Naive thymus-derived CD4-positive, alpha-beta T cell (primary cell): ENCODE measurements at regions of chr16 and their contacts with region 1.

Region 1: GRCh38 chr16:30429678-30430427 is at the start of gene DCTPP1:
- DNase-seq: peak; percentile 79 to 99 (median 97)
- ATAC-seq: peak; percentile 98
- H3K4me3 ChIP-seq: peak within 1 kb of the TSS; percentile 67
- H3K4me3 Mint-ChIP-seq: no peak within 1 kb of the TSS
- H3K27ac ChIP-seq: peak within 1 kb of the TSS; percentile 85
- H3K27ac Mint-ChIP-seq: peak within 1 kb of the TSS in 1 of 9 donors; percentile 38
- H3K4me1 ChIP-seq: peaks cover 16 to 19% of the 10 kb centered on the region in 2 donors
- H3K4me1 Mint-ChIP-seq: peaks cover 14 to 29% (median 21%) of the 10 kb centered on the region in 7 donors
- H3K27me3 ChIP-seq: no peaks in the 10 kb centered on the region
- H3K27me3 Mint-ChIP-seq: no peaks in the 10 kb centered on the region
- total RNA-seq, gene DCTPP1: 11.6 to 74.1 (median 13.8) TPM

Region 2: GRCh38 chr16:30417529-30418349 is 12.1 kb before region 1 on chr16:
- CTCF ChIA-PET with region 1: interaction called, 20 read pairs
- POLR2A ChIA-PET with region 1: interaction called, 82 read pairs
- intact Hi-C with region 1: loop called (anchors 1 kb)
- DNase-seq: peak; percentile 79 to 93 (median 88)
- ATAC-seq: peak; percentile 95
- H3K4me3 ChIP-seq: peak overlapping the region; percentile 76
- H3K4me3 Mint-ChIP-seq: peak overlapping the region; percentile 54 to 80 (median 70)
- H3K27ac ChIP-seq: peak overlapping the region; percentile 85
- H3K27ac Mint-ChIP-seq: peak overlapping the region in 7 of 9 donors; percentile 69 to 88 (median 81)
- H3K4me1 ChIP-seq: peaks cover 6 to 8% of the 10 kb centered on the region in 2 donors
- H3K4me1 Mint-ChIP-seq: peaks cover 12 to 31% (median 14%) of the 10 kb centered on the region in 7 donors
- H3K27me3 ChIP-seq: no peaks in the 10 kb centered on the region
- H3K27me3 Mint-ChIP-seq: no peaks in the 10 kb centered on the region

Region 3: DNA sequence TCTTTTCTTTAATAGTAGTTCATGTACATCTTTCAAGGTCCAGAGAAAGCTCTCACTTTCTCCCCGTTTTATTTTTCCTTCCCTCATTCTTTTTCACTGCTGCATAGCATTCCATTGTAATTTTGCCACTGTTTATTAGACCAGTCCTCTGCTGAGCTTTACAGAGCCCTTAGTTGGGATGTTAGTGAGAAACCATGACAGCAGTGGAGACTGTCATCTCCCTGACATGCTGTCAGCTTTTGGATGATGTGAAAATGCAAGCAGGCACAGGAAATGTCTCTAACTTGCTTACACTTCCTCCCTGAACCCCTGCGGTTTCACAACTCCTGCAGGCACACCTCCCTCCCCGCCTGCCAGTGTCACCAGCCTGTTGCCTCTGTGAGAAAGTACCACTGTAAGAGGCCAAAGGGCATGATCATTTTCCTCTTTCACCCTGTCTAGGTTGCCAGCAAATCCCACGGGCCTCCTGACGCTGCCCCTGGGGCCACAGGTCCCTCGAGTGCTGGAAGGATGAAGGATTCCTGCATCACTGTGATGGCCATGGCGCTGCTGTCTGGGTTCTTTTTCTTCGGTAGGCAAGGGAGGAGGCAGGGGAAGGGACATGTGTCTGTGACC is 42.6 kb after region 1 on chr16 and contains the start of gene ITGAL:
- CTCF ChIA-PET with region 1: interaction called, 5 read pairs
- POLR2A ChIA-PET with region 1: interaction called, 10 read pairs
- intact Hi-C with region 1: loop called (anchors 1 kb)
- DNase-seq: peak; percentile 41 to 89 (median 84)
- ATAC-seq: peak; percentile 89
- H3K4me3 ChIP-seq: peak within 1 kb of the TSS; percentile 74
- H3K4me3 Mint-ChIP-seq: peak within 1 kb of the TSS; percentile 83 to 100 (median 98)
- H3K27ac ChIP-seq: peak within 1 kb of the TSS; percentile 84
- H3K27ac Mint-ChIP-seq: peak within 1 kb of the TSS; percentile 88 to 98 (median 96)
- H3K4me1 ChIP-seq: peaks cover 60 to 63% of the 10 kb centered on the region in 2 donors
- H3K4me1 Mint-ChIP-seq: peaks cover 43 to 83% (median 57%) of the 10 kb centered on the region in 7 donors
- H3K27me3 ChIP-seq: no peaks in the 10 kb centered on the region
- H3K27me3 Mint-ChIP-seq: no peaks in the 10 kb centered on the region
- total RNA-seq, gene ITGAL: 258 to 629 (median 436) TPM

Region 4: DNA sequence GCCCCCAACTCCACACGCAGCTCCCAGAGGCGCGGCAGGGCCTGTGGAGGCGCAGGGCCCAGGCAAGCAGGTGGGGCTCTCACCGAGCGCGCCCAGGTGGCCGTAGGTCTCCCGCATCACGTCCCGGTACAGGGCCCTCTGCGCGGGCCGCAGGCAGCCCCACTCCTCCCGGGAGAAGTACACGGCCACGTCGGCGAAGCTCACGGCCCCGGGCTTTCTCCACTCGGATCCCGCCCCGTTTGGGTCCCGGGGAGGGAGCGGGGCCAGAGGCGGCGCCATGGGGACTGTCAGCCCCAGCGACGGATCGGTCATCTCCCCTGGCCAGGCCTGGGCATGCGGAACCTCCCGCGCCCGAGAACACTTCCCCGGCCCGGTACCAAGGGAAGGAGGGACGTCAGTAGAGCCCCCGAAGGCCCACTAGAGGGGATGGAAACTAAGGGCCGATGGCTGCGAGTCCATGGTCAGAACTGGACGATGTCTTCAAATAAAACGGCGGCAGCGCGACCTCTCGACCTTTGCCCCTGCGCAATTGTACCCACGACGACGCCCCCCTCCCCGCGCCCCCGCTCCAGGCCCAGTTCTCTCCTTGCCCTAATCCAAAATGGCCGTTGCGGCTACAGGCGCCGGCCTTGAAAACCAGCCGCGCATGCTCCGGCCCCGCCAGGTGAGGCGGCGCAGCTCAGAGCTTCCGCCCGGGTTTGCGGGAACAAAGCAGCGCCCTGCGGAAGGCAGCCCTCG is 104.7 kb after region 1 on chr16 and contains the start of gene ZNF747:
- CTCF ChIA-PET with region 1: interaction called, 26 read pairs
- POLR2A ChIA-PET with region 1: interaction called, 18 read pairs
- intact Hi-C with region 1: loop called (anchors 1 kb)
- DNase-seq: peak; percentile 84 to 92 (median 89)
- ATAC-seq: peak; percentile 87
- H3K4me3 ChIP-seq: peak within 1 kb of the TSS; percentile 60
- H3K4me3 Mint-ChIP-seq: peak within 1 kb of the TSS; percentile 91 to 100 (median 96)
- H3K27ac ChIP-seq: peak within 1 kb of the TSS; percentile 98
- H3K27ac Mint-ChIP-seq: peak within 1 kb of the TSS; percentile 94 to 99 (median 98)
- H3K4me1 ChIP-seq: peaks cover 8 to 13% of the 10 kb centered on the region in 2 donors
- H3K4me1 Mint-ChIP-seq: peaks cover 14 to 53% (median 43%) of the 10 kb centered on the region in 7 donors
- H3K27me3 ChIP-seq: no peaks in the 10 kb centered on the region
- H3K27me3 Mint-ChIP-seq: no peaks in the 10 kb centered on the region
- total RNA-seq, gene ZNF747: 9.1 to 17.4 (median 13.8) TPM

Region 5: GRCh38 chr16:30585400-30586189 is 155.7 kb after region 1 on chr16 and contains the start of gene ZNF785:
- CTCF ChIA-PET with region 1: interaction called, 6 read pairs
- POLR2A ChIA-PET with region 1: interaction called, 3 read pairs
- intact Hi-C with region 1: loop called (anchors 1 kb)
- DNase-seq: peak; percentile 72 to 95 (median 93)
- ATAC-seq: peak; percentile 100
- H3K4me3 ChIP-seq: peak within 1 kb of the TSS; percentile 77
- H3K4me3 Mint-ChIP-seq: peak within 1 kb of the TSS; percentile 85 to 98 (median 94)
- H3K27ac ChIP-seq: peak within 1 kb of the TSS; percentile 81
- H3K27ac Mint-ChIP-seq: peak within 1 kb of the TSS; percentile 89 to 95 (median 92)
- H3K4me1 ChIP-seq: peaks cover 8 to 12% of the 10 kb centered on the region in 2 donors
- H3K4me1 Mint-ChIP-seq: peaks cover 6 to 44% (median 32%) of the 10 kb centered on the region in 7 donors
- H3K27me3 ChIP-seq: no peaks in the 10 kb centered on the region
- H3K27me3 Mint-ChIP-seq: peaks cover 0 to 2% (median 0%) of the 10 kb centered on the region in 5 donors
- total RNA-seq, gene ZNF785: 10.2 to 37.1 (median 21.4) TPM

Region 6: DNA sequence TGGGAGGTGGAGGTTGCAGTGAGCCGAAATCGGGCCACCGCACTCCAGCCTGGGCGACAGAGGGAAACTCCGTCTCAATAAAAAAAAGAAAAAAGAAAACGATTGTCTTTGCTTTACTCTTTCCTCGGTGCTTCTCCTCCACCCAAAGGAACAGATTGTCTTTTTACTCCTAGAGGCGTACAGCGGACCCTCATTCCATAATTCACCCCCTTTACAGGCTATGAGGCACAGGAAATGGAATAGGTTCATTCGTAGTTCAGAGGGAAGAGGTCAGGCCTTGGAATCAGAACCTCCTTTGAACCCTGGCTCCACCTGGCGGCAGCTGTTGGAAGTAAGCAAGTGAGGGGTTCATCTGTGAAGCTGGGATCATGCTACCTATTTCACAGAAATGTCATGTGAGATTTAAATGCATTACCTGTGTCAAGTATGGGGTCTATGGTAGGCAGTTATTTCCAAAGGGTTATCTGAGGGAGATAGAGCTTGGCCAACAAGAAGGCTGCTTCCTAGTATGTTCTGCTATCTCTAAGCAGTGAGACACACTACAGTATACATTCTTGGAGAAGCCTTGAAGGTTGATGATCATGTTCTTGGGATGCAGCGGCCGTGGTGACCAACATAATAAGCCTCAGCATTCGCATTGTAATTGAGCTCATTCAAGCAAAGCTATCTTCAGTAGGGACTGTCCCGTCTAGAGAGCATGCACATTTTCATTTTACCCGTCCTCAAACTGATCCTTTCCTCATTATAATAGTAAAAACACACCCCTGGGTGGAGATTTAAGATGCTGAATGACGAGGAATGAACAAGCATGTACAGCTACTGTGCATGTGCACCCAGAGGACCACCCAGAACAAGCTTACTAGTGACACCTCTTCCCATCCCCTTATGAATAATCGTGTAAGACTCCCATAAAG is 199.0 kb after region 1 on chr16:
- CTCF ChIA-PET with region 1: interaction called, 5 read pairs
- POLR2A ChIA-PET with region 1: interaction called, 5 read pairs
- intact Hi-C with region 1: loop called (anchors 1 to 2 kb)
- DNase-seq: peak; percentile 64 to 89 (median 80)
- ATAC-seq: peak; percentile 97
- H3K4me3 ChIP-seq: peak overlapping the region; percentile 51
- H3K4me3 Mint-ChIP-seq: peak overlapping the region; percentile 58 to 85 (median 72)
- H3K27ac ChIP-seq: peak overlapping the region; percentile 60
- H3K27ac Mint-ChIP-seq: peak overlapping the region in 8 of 9 donors; percentile 58 to 89 (median 80)
- H3K4me1 ChIP-seq: peaks cover 0 to 3% of the 10 kb centered on the region in 2 donors
- H3K4me1 Mint-ChIP-seq: peaks cover 4 to 12% (median 8%) of the 10 kb centered on the region in 7 donors
- H3K27me3 ChIP-seq: no peaks in the 10 kb centered on the region
- H3K27me3 Mint-ChIP-seq: peaks cover 0 to under 1% (median 0%) of the 10 kb centered on the region in 5 donors

Region 7: GRCh38 chr16:30957456-30958174 is 527.8 kb after region 1 on chr16 and contains the start of gene SETD1A:
- CTCF ChIA-PET with region 1: no interaction called
- POLR2A ChIA-PET with region 1: no interaction called
- intact Hi-C with region 1: loop called in 1 of 2 experiments (anchors 2 kb)
- DNase-seq: peak; percentile 94 to 99 (median 97)
- ATAC-seq: peak; percentile 93
- H3K4me3 ChIP-seq: peak within 1 kb of the TSS; percentile 100
- H3K4me3 Mint-ChIP-seq: peak within 1 kb of the TSS; percentile 81 to 97 (median 96)
- H3K27ac ChIP-seq: peak within 1 kb of the TSS; percentile 93
- H3K27ac Mint-ChIP-seq: peak within 1 kb of the TSS; percentile 97 to 100 (median 98)
- H3K4me1 ChIP-seq: peaks cover 16 to 22% of the 10 kb centered on the region in 2 donors
- H3K4me1 Mint-ChIP-seq: peaks cover 23 to 46% (median 29%) of the 10 kb centered on the region in 7 donors
- H3K27me3 ChIP-seq: no peaks in the 10 kb centered on the region
- H3K27me3 Mint-ChIP-seq: peaks cover 0 to 3% (median 0%) of the 10 kb centered on the region in 5 donors
- total RNA-seq, gene SETD1A: 27.0 to 47.2 (median 36.8) TPM